PC-3 (cell line): ENCODE measurements at regions of chr5 and their contacts with region 1.

Region 1: GRCh38 chr5:108748401-108749127 is 867 bp downstream of the FER start:
- DNase-seq: peak; percentile 99
- ATAC-seq: peak; percentile 91
- H3K4me3 ChIP-seq: peak overlapping the region; percentile 77
- H3K27ac ChIP-seq: peak overlapping the region; percentile 77
- H3K4me1 ChIP-seq: peaks cover 35% of the 10 kb centered on the region
- H3K27me3 ChIP-seq: no peaks in the 10 kb centered on the region
- CTCF ChIP-seq: peak; percentile 30

Region 2: DNA sequence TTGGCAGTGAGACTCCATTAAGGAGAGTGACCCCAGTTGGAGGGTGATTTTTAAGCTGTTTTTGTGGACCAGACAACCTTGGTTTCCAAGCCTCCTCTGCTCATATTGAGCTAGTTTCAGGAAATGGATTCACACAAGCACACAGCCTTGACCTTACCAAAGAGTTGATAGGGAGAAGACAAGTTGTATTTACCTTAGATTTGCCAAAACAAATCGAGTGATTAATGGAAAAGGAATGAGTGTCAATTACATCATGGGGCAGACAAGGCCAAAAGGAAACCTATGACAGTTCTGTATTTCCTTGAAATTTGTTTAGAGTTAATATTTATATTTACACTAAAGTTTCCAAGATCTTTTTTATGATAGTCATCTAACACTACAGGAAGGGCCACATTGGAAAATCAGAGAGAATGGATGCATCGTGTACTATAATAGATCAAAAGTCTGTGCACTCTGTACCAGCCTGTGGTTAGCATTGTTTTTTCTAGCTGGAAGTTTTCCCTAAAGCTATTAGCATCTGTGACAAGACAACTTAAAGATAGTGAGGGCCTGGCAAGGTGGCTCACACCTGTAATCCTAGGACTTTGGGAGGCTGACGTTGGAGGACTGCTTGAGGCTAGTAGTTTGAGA is 86.9 kb before region 1 on chr5:
- CTCF ChIA-PET with region 1: interaction called, 3 read pairs
- POLR2A ChIA-PET with region 1: no interaction called
- intact Hi-C with region 1: loop called (anchors 1 kb)
- DNase-seq: peak; percentile 92
- ATAC-seq: peak; percentile 96
- H3K4me3 ChIP-seq: no peak overlapping the region
- H3K27ac ChIP-seq: peak overlapping the region; percentile 15; the same call in 1 of the 2 replicates
- H3K4me1 ChIP-seq: peaks cover 19% of the 10 kb centered on the region
- H3K27me3 ChIP-seq: no peaks in the 10 kb centered on the region
- CTCF ChIP-seq: no peak

Region 3: GRCh38 chr5:108681079-108681921 is 67.3 kb before region 1 on chr5:
- CTCF ChIA-PET with region 1: no interaction called
- POLR2A ChIA-PET with region 1: no interaction called
- intact Hi-C with region 1: loop called (anchors 2 kb)
- DNase-seq: peak; percentile 70
- ATAC-seq: peak; percentile 92
- H3K4me3 ChIP-seq: no peak overlapping the region
- H3K27ac ChIP-seq: no peak overlapping the region
- H3K4me1 ChIP-seq: 0 out of 2 replicates have a peak, but pooled peaks cover 3% of the 10 kb centered on the region
- H3K27me3 ChIP-seq: no peaks in the 10 kb centered on the region
- CTCF ChIP-seq: peak; percentile 88

Region 4: GRCh38 chr5:108700930-108701329 is 47.6 kb before region 1 on chr5:
- CTCF ChIA-PET with region 1: no interaction called
- POLR2A ChIA-PET with region 1: no interaction called
- intact Hi-C with region 1: no loop called
- DNase-seq: no peak
- ATAC-seq: no peak
- H3K4me3 ChIP-seq: no peak overlapping the region
- H3K27ac ChIP-seq: no peak overlapping the region
- H3K4me1 ChIP-seq: no peaks in the 10 kb centered on the region
- H3K27me3 ChIP-seq: no peaks in the 10 kb centered on the region
- CTCF ChIP-seq: no peak

Region 5: GRCh38 chr5:108727651-108728565 is 20.7 kb before region 1 on chr5:
- CTCF ChIA-PET with region 1: no interaction called
- POLR2A ChIA-PET with region 1: interaction called, 4 read pairs
- intact Hi-C with region 1: loop called (anchors 1 kb)
- DNase-seq: peak; percentile 90
- ATAC-seq: peak; percentile 100
- H3K4me3 ChIP-seq: peak overlapping the region; percentile 79
- H3K27ac ChIP-seq: peak overlapping the region; percentile 49
- H3K4me1 ChIP-seq: peaks cover 26% of the 10 kb centered on the region
- H3K27me3 ChIP-seq: no peaks in the 10 kb centered on the region
- CTCF ChIP-seq: no peak

Region 6: GRCh38 chr5:108801776-108802175 is 53.2 kb after region 1 on chr5:
- CTCF ChIA-PET with region 1: no interaction called
- POLR2A ChIA-PET with region 1: no interaction called
- intact Hi-C with region 1: loop called (anchors 2 kb)
- DNase-seq: peak; percentile 92
- ATAC-seq: peak; percentile 97
- H3K4me3 ChIP-seq: peak overlapping the region; percentile 29; the same call in 1 of the 2 replicates
- H3K27ac ChIP-seq: peak overlapping the region; percentile 71
- H3K4me1 ChIP-seq: peaks cover 43% of the 10 kb centered on the region
- H3K27me3 ChIP-seq: no peaks in the 10 kb centered on the region
- CTCF ChIP-seq: no peak

Region 7: GRCh38 chr5:108900668-108901067 is 152.1 kb after region 1 on chr5:
- CTCF ChIA-PET with region 1: no interaction called
- POLR2A ChIA-PET with region 1: interaction called, 5 read pairs
- intact Hi-C with region 1: loop called (anchors 2 kb)
- DNase-seq: peak; percentile 70
- ATAC-seq: peak; percentile 96
- H3K4me3 ChIP-seq: no peak overlapping the region
- H3K27ac ChIP-seq: peak overlapping the region; percentile 27
- H3K4me1 ChIP-seq: peaks cover 16% of the 10 kb centered on the region
- H3K27me3 ChIP-seq: no peaks in the 10 kb centered on the region
- CTCF ChIP-seq: no peak